RWPE1 (cell line): ENCODE measurements at regions of chr16 and their contacts with region 1.

Region 1: DNA sequence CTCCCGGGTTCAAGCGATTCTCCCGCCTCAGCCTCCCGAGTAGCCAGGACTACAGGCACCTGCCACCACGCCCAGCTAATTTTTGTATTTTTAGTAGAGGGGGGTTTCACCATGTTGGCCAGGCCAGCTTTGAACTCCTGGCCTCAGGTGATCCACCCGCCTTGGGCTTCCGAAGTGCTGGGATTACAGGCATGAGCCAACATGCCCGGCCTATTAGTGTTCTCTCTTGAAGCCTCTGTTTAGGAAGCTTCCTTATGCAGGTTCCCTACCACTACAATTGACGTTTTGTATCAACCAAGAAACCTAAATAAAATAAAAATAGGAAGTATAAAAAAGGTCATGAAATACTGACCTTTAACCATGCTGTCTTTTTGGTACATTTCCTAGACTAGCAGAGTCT is 16.0 kb downstream of the CHST5 start:
- DNase-seq: no peak
- H3K27ac ChIP-seq: 0 out of 2 replicates have a peak overlapping the region, but pooled peaks have one; percentile 5
- CTCF ChIP-seq: no peak

Region 2: DNA sequence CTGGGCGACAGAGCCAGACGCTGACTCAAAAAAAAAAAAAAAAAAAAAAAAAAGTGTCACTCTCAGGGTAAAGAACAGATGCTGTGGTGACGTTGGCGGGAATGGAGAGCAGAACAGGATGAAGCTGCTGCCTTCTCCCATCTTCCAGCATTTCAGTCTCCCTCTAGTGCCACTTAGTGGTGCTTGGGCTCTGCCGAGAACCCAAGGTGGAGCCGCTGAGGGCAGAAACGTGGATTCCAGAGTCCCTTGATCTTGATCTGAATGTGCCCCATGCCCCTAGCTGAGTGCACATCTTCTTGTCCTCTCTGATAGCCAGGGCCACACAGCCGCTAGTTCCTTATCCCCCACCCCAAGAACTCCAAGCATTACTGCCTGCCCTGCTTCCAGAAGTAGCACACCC is 702.0 kb before region 1 on chr16:
- CTCF ChIA-PET with region 1: no interaction called
- POLR2A ChIA-PET with region 1: no interaction called
- DNase-seq: no peak
- H3K27ac ChIP-seq: no peak overlapping the region
- CTCF ChIP-seq: no peak

Region 3: GRCh38 chr16:75392911-75393310 is 127.0 kb before region 1 on chr16:
- CTCF ChIA-PET with region 1: no interaction called
- POLR2A ChIA-PET with region 1: no interaction called
- DNase-seq: no peak
- H3K27ac ChIP-seq: no peak overlapping the region
- CTCF ChIP-seq: no peak

Region 4: GRCh38 chr16:75464130-75464918 is 55.6 kb before region 1 on chr16 and contains the start of gene TMEM170A:
- CTCF ChIA-PET with region 1: interaction called, 12 read pairs
- POLR2A ChIA-PET with region 1: no interaction called
- DNase-seq: peak; percentile 97
- H3K27ac ChIP-seq: peak within 1 kb of the TSS; percentile 87
- CTCF ChIP-seq: peak; percentile 100

Region 5: GRCh38 chr16:75471723-75472633 is 47.9 kb before region 1 on chr16:
- CTCF ChIA-PET with region 1: interaction called, 13 read pairs
- POLR2A ChIA-PET with region 1: interaction called, 3 read pairs
- DNase-seq: peak; percentile 69
- H3K27ac ChIP-seq: no peak overlapping the region
- CTCF ChIP-seq: peak; percentile 86